ENCODE measurements at regions of chr5 and their contacts with region 1.

Region 1: GRCh38 chr5:129767906-129768380 is 20.0 kb downstream of the MINAR2 start:
- DNase-seq: peak; percentile 76 to 83
- H3K4me3 ChIP-seq: no peak overlapping the region
- H3K4me3 Mint-ChIP-seq: no peak overlapping the region
- H3K27ac Mint-ChIP-seq: no peak overlapping the region
- H3K4me1 ChIP-seq: no peaks in the 10 kb centered on the region; the same call in 1 of the 2 replicates
- H3K4me1 Mint-ChIP-seq: no peaks in the 10 kb centered on the region
- H3K27me3 ChIP-seq: no peaks in the 10 kb centered on the region
- H3K27me3 Mint-ChIP-seq: no peaks in the 10 kb centered on the region
- CTCF ChIP-seq: peak; percentile 95 to 96

Region 2: DNA sequence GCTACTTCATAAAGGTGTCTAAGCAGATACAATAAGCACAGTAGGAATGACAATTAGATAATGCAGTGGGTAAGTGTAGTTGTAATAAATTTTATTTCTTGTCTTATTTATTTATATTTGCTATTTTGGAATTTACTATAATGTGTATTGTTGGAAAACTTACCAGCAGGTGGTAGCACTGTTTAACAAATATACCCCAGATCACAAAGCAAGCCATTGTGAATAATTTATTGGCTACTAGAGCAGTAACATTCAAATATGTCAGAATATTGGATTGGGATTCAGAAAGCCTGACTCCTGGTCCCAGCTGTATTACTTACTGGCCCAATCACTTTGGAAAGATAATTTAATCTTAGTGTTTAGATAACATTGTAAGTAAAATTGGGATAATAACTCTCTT is 595.4 kb before region 1 on chr5:
- CTCF ChIA-PET with region 1: no interaction called
- POLR2A ChIA-PET with region 1: no interaction called
- intact Hi-C with region 1: loop called (anchors 1 kb)
- DNase-seq: no peak
- H3K4me3 ChIP-seq: no peak overlapping the region
- H3K4me3 Mint-ChIP-seq: no peak overlapping the region
- H3K27ac Mint-ChIP-seq: no peak overlapping the region
- H3K4me1 ChIP-seq: no peaks in the 10 kb centered on the region
- H3K4me1 Mint-ChIP-seq: no peaks in the 10 kb centered on the region
- H3K27me3 ChIP-seq: no peaks in the 10 kb centered on the region
- H3K27me3 Mint-ChIP-seq: peaks cover 5% of the 10 kb centered on the region
- CTCF ChIP-seq: no peak

Region 3: GRCh38 chr5:129400322-129400983 is 367.5 kb before region 1 on chr5:
- CTCF ChIA-PET with region 1: no interaction called
- POLR2A ChIA-PET with region 1: no interaction called
- intact Hi-C with region 1: loop called (anchors 1 kb)
- DNase-seq: no peak
- H3K4me3 ChIP-seq: no peak overlapping the region
- H3K4me3 Mint-ChIP-seq: no peak overlapping the region
- H3K27ac Mint-ChIP-seq: no peak overlapping the region
- H3K4me1 ChIP-seq: no peaks in the 10 kb centered on the region
- H3K4me1 Mint-ChIP-seq: no peaks in the 10 kb centered on the region
- H3K27me3 ChIP-seq: no peaks in the 10 kb centered on the region
- H3K27me3 Mint-ChIP-seq: no peaks in the 10 kb centered on the region
- CTCF ChIP-seq: peak in 1 of 2 experiments; percentile 43

Region 4: DNA sequence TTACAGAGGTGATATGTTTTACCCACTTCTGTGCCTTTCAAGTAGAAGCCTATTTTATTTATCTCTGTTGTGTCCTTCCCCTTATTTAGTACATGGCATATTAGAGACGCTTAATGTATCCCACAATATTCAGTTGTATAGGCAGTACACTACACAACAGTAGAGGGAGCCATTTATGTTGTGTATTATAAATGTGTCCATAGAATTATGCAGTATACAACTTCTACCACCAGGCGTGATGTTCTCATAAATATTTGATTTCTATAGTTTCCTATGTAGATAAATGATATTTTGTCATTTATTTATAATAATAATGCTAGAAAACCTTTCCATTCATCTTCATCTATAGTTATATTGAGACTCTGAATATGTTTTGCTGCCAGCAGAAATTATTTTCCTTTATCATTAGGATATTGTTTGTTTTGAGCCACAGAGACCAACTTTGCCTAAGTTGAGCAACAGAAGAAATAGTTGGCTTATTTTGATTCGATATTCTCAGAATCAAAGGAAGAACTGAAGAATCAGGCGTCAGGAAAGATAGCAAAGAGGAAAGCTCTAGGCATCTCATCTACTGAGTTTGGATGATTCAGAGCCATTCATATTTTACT is 226.2 kb before region 1 on chr5:
- CTCF ChIA-PET with region 1: no interaction called
- POLR2A ChIA-PET with region 1: no interaction called
- intact Hi-C with region 1: loop called (anchors 1 kb)
- DNase-seq: peak in 1 of 2 experiments; percentile 15
- H3K4me3 ChIP-seq: no peak overlapping the region
- H3K4me3 Mint-ChIP-seq: no peak overlapping the region
- H3K27ac Mint-ChIP-seq: no peak overlapping the region
- H3K4me1 ChIP-seq: no peaks in the 10 kb centered on the region
- H3K4me1 Mint-ChIP-seq: no peaks in the 10 kb centered on the region
- H3K27me3 ChIP-seq: no peaks in the 10 kb centered on the region
- H3K27me3 Mint-ChIP-seq: no peaks in the 10 kb centered on the region
- CTCF ChIP-seq: peak; percentile 33 to 37

Region 5: GRCh38 chr5:129696636-129697035 is 71.3 kb before region 1 on chr5:
- CTCF ChIA-PET with region 1: no interaction called
- POLR2A ChIA-PET with region 1: no interaction called
- intact Hi-C with region 1: loop called (anchors 1 kb)
- DNase-seq: no peak
- H3K4me3 ChIP-seq: no peak overlapping the region
- H3K4me3 Mint-ChIP-seq: no peak overlapping the region
- H3K27ac Mint-ChIP-seq: no peak overlapping the region
- H3K4me1 ChIP-seq: no peaks in the 10 kb centered on the region
- H3K4me1 Mint-ChIP-seq: no peaks in the 10 kb centered on the region
- H3K27me3 ChIP-seq: no peaks in the 10 kb centered on the region
- H3K27me3 Mint-ChIP-seq: no peaks in the 10 kb centered on the region
- CTCF ChIP-seq: no peak

Region 6: GRCh38 chr5:130710596-130710995 is 942.7 kb after region 1 on chr5:
- CTCF ChIA-PET with region 1: no interaction called
- POLR2A ChIA-PET with region 1: no interaction called
- intact Hi-C with region 1: loop called (anchors 10 kb)
- DNase-seq: peak; percentile 44 to 62
- H3K4me3 ChIP-seq: no peak overlapping the region
- H3K4me3 Mint-ChIP-seq: peak overlapping the region; percentile 41
- H3K27ac Mint-ChIP-seq: peak overlapping the region; percentile 20
- H3K4me1 ChIP-seq: peaks cover 16% of the 10 kb centered on the region
- H3K4me1 Mint-ChIP-seq: peaks cover 15% of the 10 kb centered on the region
- H3K27me3 ChIP-seq: no peaks in the 10 kb centered on the region
- H3K27me3 Mint-ChIP-seq: no peaks in the 10 kb centered on the region
- CTCF ChIP-seq: no peak

Measured in Caco-2 (cell line).